Cardiac septum (tissue), 1 donor: ENCODE measurements at regions of chr2 and their contacts with region 1.

Region 1: DNA sequence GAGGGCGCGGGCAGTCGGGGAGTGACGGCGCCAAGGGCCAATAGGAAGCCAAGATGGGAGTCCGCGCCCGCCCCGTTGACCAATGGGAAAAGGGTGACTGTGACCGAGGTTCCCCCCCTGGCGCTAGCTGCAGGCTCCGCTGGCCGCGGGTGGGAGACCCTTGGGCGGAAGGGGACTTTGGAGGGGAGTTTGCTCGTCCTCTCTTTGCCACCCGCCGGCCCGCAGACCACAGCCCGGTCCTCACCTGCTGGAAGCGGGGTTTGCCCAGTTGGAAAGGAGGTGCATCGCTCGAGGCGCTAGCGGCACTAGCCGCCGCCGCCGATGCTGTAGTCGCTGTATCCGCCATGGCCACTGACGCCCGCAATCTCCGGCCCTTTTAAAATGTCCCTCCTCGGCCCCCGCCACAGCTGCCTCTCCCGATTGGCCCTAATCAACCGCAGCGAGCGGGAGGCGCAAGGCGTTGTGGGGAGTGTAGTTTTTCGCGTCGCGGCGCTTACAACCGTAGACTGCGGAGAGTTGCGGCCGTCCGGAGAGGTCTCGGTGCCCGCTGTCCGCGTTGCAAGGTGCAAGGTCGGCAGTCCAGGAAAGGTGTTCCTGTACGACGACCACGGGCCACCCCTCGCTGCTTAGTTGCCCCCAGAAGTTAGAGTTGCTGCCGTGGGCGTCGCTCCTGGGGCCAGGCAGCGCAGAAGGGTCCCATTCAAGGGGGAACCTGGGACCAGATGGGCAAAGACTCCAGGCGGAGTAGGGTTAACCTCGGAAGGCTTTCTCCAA is at the start of gene SFXN5:
- DNase-seq: peak; percentile 100
- total RNA-seq, gene SFXN5: 13.3 TPM

Region 2: GRCh38 chr2:72980535-72981217 is 90.9 kb before region 1 on chr2:
- intact Hi-C with region 1: loop called (anchors 2 kb)
- DNase-seq: no peak

Region 3: DNA sequence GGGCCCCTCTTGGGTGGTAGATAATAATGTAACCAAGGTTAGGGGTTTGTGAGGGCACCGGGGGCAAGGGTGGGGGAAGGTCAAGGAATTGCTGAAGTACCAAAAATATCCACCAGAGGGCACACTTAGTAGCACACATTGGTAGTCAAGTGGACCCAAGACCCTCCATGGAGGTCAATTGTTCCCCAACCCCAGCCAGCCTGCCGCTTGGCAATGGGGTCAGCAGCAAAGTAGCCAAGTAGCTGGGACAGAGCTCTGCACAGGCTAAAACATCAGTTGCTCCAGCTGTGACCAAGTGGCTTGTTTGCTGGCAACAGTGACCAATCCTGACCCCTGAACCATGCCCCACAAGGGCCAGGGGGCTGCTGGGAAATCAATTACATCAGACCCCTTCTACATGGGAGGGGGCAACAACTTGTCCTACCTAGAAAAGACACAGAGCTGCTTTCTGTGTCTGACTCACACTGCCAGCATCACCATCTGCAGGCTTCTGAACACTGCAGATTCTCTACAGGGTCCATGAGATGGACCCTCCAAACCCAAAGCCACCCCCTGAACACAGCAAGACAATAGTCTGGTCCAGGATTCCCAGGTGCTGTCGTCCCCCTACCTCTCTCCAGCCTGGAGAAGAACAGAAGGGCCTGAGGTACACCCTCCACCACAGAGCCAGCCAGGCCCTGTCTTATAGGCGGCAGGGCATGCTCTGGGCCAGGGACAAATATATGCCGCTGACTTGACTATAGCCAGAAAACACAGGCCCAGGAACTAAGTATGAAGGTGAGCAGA is 78.2 kb before region 1 on chr2:
- intact Hi-C with region 1: no loop called
- DNase-seq: no peak

Region 4: DNA sequence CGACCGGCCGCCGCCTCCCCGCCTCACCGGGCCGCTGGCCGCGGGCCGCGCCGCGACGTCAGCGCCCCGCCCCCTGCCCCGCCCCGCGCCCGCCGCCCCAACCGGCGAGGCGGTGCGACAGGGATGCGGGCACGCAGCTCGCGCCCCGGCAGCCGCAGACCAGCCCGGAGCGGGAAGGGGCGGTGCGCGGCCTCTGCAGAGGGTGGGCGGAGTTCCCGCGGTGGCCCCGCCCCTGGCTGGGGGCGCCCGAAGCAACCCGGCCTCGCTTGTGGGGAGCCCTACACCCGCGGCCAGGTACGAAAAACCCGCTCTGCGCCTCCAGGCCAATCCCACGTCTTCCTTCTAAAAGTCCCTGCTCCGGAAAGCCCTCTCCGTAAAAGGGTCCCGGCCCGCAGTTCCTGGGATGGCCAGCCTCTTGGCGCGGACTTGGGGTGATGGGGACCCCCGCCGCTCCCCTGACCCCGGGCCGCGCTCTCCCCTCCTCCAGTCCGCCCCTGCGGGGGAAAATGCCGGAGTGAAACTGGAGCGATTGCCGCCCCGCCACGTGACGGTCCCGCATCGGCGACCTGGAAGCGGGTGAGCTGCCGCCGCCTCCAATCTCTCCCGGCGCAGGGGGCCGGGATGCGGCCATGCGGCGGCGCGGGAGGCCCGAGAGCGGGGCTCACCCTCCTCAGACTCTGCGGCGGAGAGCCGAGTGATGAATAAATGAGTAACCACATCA is 41.5 kb after region 1 on chr2 and contains the start of gene RAB11FIP5:
- intact Hi-C with region 1: loop called (anchors 2 kb)
- DNase-seq: peak; percentile 88
- total RNA-seq, gene RAB11FIP5: 38.1 TPM